ENCODE measurements at regions of chr4 and their contacts with region 1.

Region 1: GRCh38 chr4:139030614-139031235 is 15.1 kb downstream of the NOCT start:
- DNase-seq: peak; percentile 34
- ATAC-seq: peak; percentile 75
- H3K4me3 Mint-ChIP-seq: peak overlapping the region; percentile 0
- H3K27ac Mint-ChIP-seq: no peak overlapping the region
- H3K4me1 Mint-ChIP-seq: peaks cover 32% of the 10 kb centered on the region
- H3K27me3 Mint-ChIP-seq: no peaks in the 10 kb centered on the region
- CTCF ChIP-seq: peak; percentile 60

Region 2: DNA sequence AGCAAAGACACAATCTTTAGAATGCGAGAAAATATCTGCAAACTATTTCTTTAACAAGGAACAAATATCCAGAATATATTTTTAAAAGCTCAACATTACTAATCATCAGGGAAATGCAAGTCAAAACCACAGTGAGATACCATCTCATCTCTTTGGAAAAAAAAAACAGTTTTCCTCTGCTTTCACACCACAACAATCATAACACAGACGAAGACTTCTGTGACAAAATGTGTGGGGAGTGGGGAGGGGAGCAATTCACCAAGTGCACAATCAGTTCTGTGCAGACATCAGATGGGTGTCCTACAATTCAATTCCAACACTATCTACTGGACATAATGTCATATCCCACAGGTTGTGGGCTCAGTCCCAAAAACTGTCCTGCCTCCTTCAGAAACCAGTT is 495.4 kb before region 1 on chr4:
- CTCF ChIA-PET with region 1: no interaction called
- POLR2A ChIA-PET with region 1: no interaction called
- intact Hi-C with region 1: no loop called
- DNase-seq: no peak
- ATAC-seq: no peak
- H3K4me3 Mint-ChIP-seq: no peak overlapping the region
- H3K27ac Mint-ChIP-seq: no peak overlapping the region
- H3K4me1 Mint-ChIP-seq: no peaks in the 10 kb centered on the region
- H3K27me3 Mint-ChIP-seq: no peaks in the 10 kb centered on the region
- CTCF ChIP-seq: no peak

Region 3: DNA sequence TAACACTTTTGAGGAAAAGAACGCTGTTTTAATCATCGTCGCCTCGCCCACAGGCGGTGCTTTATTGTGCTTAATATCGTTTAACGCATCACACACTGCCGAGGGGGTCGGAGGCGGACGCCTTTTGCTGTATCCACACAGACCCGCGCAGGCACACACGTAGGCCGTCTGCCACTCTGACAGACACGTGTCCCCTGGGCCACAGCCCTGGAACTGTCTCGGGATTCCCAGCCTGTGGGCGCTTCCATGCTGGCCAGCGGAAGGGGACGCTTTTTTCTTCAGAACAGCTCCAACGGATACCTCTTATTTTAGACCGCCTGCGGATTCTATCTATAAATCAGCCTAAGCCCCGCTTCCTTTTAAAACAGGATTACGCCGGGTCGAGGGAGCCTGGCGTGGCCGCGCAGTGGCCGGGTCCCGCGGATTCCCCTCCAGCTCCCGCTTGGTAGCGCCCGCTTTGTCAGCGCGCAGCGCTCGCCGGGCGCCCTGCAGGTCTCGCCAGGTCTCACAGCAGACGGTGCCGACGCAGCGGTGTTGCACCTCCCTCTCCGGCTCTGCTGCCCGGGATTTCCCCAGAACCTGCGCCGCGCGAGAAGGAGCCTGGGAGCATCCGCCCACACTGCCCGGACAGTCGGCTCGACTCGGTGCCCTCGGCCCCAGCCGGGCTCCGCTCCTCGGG is 15.3 kb before region 1 on chr4 and contains the start of gene NOCT:
- CTCF ChIA-PET with region 1: interaction called, 20 read pairs
- POLR2A ChIA-PET with region 1: interaction called, 7 read pairs
- intact Hi-C with region 1: no loop called
- DNase-seq: peak; percentile 86
- ATAC-seq: peak; percentile 91
- H3K4me3 Mint-ChIP-seq: peak within 1 kb of the TSS; percentile 92
- H3K27ac Mint-ChIP-seq: peak within 1 kb of the TSS; percentile 99
- H3K4me1 Mint-ChIP-seq: peaks cover 32% of the 10 kb centered on the region
- H3K27me3 Mint-ChIP-seq: no peaks in the 10 kb centered on the region
- CTCF ChIP-seq: no peak
- total RNA-seq, gene NOCT: 9.1 and 9.4 TPM in 2 replicates

Region 4: DNA sequence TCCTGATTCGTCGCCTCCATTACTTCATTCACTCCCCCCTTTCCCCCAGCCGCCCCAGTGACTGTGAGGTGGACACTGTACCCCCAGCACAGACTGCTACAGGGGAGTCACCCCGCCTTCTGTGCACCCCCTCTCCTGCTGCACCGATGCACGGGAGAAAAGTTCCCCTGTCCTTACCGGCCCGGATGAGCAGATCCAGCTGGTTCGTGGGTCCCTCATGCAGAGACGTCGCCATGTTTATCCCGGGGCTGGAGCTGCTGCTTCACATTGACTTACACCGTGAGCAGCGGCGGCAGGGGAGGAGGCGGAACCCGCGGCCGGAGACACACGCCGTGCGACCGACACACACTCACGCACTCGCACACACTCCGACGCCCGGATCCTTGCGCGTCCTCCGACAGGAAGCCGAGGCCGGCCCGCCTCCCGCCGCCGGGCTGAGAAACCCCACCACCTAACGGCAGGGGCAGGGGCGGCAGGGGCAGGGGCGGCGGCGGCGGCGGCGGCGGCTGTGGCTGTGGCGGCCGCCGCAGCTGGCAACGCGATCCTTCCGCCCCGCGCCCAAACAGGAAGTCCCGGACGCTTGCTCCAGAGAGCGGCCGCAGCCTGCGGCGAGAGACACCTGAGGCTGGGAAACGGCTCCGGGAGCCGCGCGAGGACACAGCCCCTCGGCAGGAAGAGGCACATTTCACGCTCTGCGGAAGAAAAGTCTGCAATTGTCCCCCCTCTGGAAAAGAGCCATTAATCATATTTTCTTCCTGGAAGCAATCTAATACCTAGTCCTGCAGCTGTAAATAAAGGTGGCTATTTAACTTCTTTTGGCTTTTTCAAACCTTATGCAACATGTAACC is 53.5 kb after region 1 on chr4:
- CTCF ChIA-PET with region 1: interaction called, 12 read pairs
- POLR2A ChIA-PET with region 1: interaction called, 11 read pairs
- intact Hi-C with region 1: loop called (anchors 2 kb)
- DNase-seq: peak; percentile 79
- ATAC-seq: peak; percentile 66
- H3K4me3 Mint-ChIP-seq: peak overlapping the region; percentile 99
- H3K27ac Mint-ChIP-seq: peak overlapping the region; percentile 99
- H3K4me1 Mint-ChIP-seq: peaks cover 38% of the 10 kb centered on the region
- H3K27me3 Mint-ChIP-seq: no peaks in the 10 kb centered on the region
- CTCF ChIP-seq: no peak

Region 5: DNA sequence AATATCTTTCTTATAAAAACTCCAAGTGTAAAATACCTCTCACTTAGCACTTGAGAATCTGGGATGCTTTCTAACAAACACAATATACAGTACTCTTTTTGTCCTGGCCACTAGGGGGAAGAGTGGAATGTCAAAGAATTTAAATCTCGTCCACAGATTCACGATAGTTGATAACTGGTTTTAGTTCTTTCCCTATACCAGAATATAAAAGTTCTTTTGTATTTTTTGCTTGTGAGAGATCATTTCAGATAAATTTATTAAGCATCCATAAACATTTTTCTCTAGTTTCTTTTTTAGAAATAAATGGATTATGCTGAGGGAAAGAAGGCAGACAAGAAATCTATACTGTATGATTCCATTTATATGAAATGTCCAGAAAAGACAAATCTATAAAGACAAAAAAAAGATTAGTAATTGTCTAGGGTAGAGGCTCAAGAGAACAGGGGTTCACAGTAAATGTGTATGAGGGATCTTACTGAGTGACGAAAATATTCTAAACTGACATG is 198.9 kb after region 1 on chr4:
- CTCF ChIA-PET with region 1: interaction called, 4 read pairs
- POLR2A ChIA-PET with region 1: no interaction called
- intact Hi-C with region 1: loop called (anchors 2 kb)
- DNase-seq: no peak
- ATAC-seq: peak; percentile 61
- H3K4me3 Mint-ChIP-seq: no peak overlapping the region
- H3K27ac Mint-ChIP-seq: no peak overlapping the region
- H3K4me1 Mint-ChIP-seq: peaks cover 3% of the 10 kb centered on the region
- H3K27me3 Mint-ChIP-seq: no peaks in the 10 kb centered on the region
- CTCF ChIP-seq: no peak

Region 6: DNA sequence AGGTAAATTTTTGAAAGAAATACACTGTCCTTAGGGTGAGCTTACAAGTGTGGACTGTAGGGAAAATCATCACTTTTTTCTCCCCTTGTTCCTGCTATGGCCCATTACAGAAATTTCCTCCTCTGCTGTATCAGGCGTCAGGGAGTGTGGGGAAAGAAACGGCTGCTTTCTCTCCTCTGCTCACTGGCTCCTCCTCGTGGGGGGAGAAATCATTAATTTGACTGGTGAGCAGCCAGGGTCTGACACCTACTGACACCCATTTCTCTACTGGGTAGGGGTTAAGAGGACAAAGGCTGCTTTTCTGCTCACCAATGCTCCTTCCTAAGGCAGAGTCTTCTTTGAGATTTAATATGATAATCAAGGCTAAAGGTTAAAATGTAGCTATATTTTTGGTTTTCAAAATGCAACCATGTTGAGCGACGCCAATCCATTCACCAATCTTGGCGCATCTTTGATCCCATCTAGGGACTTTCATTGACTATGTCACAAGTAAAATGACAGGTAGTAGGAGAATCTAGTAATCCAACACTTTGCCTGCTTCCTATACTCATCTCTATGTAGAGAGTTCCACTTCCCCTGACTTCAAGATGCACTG is 500.2 kb after region 1 on chr4:
- CTCF ChIA-PET with region 1: interaction called, 20 read pairs
- POLR2A ChIA-PET with region 1: no interaction called
- intact Hi-C with region 1: loop called (anchors 1 kb)
- DNase-seq: peak; percentile 19
- ATAC-seq: peak; percentile 60
- H3K4me3 Mint-ChIP-seq: no peak overlapping the region
- H3K27ac Mint-ChIP-seq: no peak overlapping the region
- H3K4me1 Mint-ChIP-seq: peaks cover 4% of the 10 kb centered on the region
- H3K27me3 Mint-ChIP-seq: no peaks in the 10 kb centered on the region
- CTCF ChIP-seq: no peak

Region 7: GRCh38 chr4:140727569-140727968 is 1696.8 kb after region 1 on chr4:
- CTCF ChIA-PET with region 1: no interaction called
- POLR2A ChIA-PET with region 1: no interaction called
- intact Hi-C with region 1: no loop called
- DNase-seq: no peak
- ATAC-seq: peak; percentile 16
- H3K4me3 Mint-ChIP-seq: peak overlapping the region; percentile 5
- H3K27ac Mint-ChIP-seq: peak overlapping the region; percentile 81
- H3K4me1 Mint-ChIP-seq: peaks cover 78% of the 10 kb centered on the region
- H3K27me3 Mint-ChIP-seq: no peaks in the 10 kb centered on the region
- CTCF ChIP-seq: no peak

Measured in activated B cell treated with CpG ODN at 0.5 μM for 24 hours (primary cell).